Endothelial cell of umbilical vein (primary cell): ENCODE measurements at regions of chr11 and their contacts with region 1.

Region 1: GRCh38 chr11:61168800-61169199 is 7.6 kb upstream of the VPS37C start:
- DNase-seq: no peak
- H3K4me3 ChIP-seq: no peak overlapping the region
- H3K27ac ChIP-seq: no peak overlapping the region
- H3K4me1 ChIP-seq: no peaks in the 10 kb centered on the region
- H3K27me3 ChIP-seq: peaks cover 0 to 9% of the 10 kb centered on the region in 2 experiments
- CTCF ChIP-seq: no peak
- POLR2A ChIP-seq: no peak

Region 2: DNA sequence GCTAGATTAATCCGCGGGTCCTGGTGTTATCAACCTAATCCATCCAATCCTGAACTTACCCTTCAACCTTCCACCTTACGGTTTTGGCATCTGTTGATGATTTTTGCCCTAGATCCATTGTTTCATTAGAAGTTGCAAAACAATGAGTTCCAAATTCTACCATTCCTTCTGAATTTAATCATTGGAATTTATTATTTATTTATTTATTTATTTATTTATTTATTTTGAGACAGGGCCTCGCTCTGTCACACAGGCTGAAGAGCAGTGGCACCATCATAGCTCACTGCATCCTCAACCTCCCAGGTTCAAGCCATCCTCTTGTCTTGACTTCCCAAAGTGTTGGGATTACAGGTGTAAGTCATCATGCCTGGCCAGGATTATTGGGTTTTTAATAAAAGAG is 12.7 kb after region 1 on chr11:
- CTCF ChIA-PET with region 1: interaction called, 13 read pairs
- POLR2A ChIA-PET with region 1: no interaction called
- dilution Hi-C with region 1: no loop called
- intact Hi-C with region 1: no loop called
- DNase-seq: no peak
- H3K4me3 ChIP-seq: no peak overlapping the region
- H3K27ac ChIP-seq: no peak overlapping the region
- H3K4me1 ChIP-seq: no peaks in the 10 kb centered on the region
- H3K27me3 ChIP-seq: peaks cover 0 to 2% of the 10 kb centered on the region in 2 experiments
- CTCF ChIP-seq: no peak
- POLR2A ChIP-seq: no peak